ENCODE measurements at regions of chr22 and their contacts with region 1.

Region 1: DNA sequence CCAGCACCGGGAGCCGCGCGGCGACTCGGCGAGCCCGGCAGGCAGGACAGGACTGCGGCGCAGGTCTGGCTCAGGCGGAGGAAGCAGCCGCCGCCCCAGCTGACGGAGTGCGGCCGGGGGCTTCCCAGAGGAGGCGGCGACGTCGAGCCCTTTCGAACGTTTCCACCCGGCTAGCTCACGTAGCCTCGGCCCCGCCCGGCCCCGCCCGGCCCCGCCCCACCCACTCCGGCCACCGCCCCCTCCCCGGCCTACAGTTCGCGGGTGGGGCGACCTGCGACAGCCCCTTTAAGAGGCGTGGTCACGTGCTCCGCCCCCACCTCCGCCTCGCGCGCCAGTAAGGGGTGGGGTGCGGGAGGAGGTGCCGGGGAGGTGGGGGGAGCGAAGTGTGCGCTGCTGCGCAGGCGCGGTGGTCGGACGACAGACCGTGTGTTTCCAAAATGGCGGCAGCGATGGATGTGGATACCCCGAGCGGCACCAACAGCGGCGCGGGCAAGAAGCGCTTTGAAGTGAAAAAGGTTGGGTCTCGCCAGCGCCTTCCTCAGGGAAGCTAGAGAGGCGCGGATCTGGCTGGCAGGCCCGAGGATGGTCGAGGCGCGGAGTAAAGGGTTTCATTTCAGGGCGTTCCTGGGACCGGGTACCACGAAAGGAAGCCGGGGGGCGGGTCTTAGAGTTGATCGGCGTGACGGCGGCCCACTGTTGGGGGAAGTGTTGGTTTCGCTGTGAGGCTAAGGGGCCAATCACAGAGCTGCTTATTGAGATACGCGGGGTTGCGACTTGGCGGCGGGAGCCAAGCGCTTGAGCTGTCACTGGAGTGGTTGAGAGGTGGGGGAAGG is at the start of gene RBX1:
- DNase-seq: peak; percentile 99
- ATAC-seq: peak; percentile 91
- total RNA-seq, gene RBX1: 34.8 to 39.0 TPM

Region 2: DNA sequence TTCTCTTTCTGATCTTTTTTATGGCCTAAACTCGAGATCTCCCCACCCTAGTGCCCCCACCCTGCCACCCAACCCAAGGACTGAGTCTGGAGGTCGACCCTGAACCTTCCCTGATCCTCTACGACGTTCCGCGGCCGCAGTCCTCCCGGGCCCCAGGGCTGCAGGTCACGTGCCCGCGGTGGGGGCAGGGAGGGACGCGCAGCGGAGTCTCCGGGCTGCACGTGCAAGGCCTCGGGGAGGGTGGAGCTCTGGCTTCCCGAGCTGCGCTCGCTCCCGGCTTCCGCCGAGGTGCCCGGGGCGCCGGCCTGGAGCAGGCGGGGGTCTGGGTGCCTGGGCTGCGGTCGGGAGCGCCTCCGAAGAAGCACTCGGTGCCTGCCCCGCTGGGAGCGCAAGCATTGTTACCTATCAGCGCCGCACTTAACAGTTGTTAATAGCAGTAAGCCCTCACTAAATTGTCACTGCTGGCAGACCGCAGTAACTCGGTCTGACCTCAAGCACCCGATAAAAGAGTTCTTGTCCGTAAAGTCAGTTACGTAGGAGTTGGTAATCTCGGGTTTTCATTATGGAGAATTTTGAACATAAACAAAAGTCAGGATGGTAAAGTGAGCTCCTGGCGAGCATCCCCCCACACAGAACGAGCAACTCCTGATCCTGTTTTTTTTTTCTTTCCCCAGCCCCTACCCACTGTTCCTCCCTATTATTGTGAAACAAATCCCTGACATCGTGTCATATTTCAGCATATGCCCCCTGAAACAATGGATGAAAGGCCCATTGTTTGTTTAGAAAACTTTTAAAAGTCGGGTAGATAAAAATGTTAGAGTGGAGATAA is 71.5 kb after region 1 on chr22:
- intact Hi-C with region 1: loop called in 1 of 2 experiments (anchors 5 kb)
- DNase-seq: peak; percentile 95 to 96
- ATAC-seq: peak; percentile 85

Region 3: DNA sequence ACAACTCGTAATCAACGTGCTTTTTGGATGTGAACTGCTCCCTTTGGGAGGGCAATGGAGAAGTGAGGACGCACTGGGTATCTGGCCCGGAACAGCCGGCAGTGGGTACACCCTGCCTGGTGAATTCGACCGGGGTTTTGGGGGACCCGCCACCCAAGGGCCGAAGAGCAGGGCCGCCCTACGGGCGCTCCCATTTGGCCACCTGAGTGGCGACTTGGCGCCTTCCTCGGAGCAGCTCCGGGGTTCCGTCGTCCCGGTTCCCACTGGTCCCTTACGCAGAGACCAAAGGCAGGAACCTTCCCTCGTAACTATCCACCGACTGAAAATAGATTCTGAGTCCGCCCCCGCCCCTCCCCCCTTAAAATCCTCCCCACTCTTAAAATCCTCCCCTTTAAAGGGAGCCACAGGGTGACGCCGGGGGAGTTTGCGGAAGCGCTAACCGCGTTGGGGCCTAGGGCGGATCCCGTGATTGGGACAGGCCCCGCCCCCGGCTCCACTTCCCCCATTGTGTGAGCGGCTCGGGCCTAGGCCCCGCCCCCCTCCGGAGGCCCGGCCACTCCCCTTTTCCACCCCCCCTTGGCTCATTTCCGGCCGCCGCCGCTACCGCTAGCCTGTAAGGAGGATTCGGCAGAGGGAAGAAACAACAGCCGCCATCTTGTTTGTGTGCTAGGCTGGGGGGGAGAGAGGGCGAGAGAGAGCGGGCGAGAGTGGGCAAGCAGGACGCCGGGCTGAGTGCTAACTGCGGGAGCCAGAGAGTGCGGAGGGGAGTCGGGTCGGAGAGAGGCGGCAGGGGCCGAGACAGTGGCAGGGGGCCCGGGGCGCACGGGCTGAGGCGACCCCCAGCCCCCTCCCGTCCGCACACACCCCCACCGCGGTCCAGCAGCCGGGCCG is 140.2 kb after region 1 on chr22:
- intact Hi-C with region 1: loop called (anchors 5 to 10 kb)
- DNase-seq: peak; percentile 99
- ATAC-seq: peak; percentile 89